ENCODE measurements at regions of chr7 and their contacts with region 1.

Region 1: DNA sequence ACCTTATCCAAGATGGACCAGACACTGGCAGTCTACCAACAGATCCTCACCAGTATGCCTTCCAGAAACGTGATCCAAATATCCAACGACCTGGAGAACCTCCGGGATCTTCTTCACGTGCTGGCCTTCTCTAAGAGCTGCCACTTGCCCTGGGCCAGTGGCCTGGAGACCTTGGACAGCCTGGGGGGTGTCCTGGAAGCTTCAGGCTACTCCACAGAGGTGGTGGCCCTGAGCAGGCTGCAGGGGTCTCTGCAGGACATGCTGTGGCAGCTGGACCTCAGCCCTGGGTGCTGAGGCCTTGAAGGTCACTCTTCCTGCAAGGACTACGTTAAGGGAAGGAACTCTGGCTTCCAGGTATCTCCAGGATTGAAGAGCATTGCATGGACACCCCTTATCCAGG is 13.4 kb downstream of the LEP start:
- DNase-seq: no peak
- H3K4me3 ChIP-seq: no peak overlapping the region
- H3K27ac ChIP-seq: no peak overlapping the region
- H3K4me1 ChIP-seq: peaks cover 13% of the 10 kb centered on the region
- H3K27me3 ChIP-seq: no peaks in the 10 kb centered on the region
- CTCF ChIP-seq: no peak

Region 2: DNA sequence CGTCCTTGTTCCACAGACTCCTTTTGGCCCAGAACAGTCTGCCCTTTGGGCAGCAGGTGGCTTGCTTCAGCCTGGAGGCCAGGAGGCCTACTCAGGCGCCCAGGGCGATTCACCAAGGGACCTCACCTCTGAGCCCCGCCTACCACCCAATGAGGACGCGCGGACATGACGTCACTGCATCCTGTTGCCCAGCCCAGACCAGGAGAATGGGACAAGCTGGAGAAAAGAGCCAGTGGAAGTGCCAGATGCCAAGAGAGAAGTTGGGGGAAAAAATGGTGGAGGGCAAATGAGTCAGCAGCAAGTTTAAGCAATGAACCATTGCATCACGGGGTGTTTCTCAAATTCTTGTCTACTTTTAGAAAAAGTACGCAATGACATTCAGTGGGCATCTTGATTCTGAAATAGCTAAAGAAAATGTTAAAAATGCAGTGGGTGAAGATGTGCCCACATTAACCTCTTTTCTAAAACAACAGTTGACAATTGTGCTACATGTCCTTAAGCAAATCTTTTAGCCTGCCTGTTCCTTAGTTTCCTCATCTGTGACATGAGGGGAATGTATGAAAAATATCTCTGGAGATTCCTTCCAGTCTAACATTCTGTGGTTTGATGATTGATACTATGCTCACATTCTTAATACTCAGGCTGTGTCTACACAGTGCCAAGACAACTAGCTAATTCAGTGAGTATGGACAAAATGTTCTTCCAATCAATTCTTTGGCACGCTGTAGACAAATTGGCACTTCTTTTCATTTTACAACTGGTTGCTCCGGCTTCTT is 37.3 kb before region 1 on chr7:
- CTCF ChIA-PET with region 1: no interaction called
- dilution Hi-C with region 1: loop called (anchors 5 kb)
- in situ Hi-C with region 1: no loop called
- intact Hi-C with region 1: no loop called
- DNase-seq: peak; percentile 96
- H3K4me3 ChIP-seq: no peak overlapping the region
- H3K27ac ChIP-seq: peak overlapping the region; percentile 92
- H3K4me1 ChIP-seq: peaks cover 43% of the 10 kb centered on the region
- H3K27me3 ChIP-seq: no peaks in the 10 kb centered on the region
- CTCF ChIP-seq: no peak